Activated T-helper 1 cell treated with anti-CD3 and anti-CD28 coated beads, Interleukin-12 subunit alpha, Interleukin-12 subunit beta, Interleukin-2, Interleukin-4 antibody, amounts not matched to agents 30 ng/mL and 10 ng/mL and 1 ng/mL, durations not matched to agents 14 hours and 24 hours and 36 hours (primary cell): ENCODE measurements at regions of chr11 and their contacts with region 1.

Region 1: DNA sequence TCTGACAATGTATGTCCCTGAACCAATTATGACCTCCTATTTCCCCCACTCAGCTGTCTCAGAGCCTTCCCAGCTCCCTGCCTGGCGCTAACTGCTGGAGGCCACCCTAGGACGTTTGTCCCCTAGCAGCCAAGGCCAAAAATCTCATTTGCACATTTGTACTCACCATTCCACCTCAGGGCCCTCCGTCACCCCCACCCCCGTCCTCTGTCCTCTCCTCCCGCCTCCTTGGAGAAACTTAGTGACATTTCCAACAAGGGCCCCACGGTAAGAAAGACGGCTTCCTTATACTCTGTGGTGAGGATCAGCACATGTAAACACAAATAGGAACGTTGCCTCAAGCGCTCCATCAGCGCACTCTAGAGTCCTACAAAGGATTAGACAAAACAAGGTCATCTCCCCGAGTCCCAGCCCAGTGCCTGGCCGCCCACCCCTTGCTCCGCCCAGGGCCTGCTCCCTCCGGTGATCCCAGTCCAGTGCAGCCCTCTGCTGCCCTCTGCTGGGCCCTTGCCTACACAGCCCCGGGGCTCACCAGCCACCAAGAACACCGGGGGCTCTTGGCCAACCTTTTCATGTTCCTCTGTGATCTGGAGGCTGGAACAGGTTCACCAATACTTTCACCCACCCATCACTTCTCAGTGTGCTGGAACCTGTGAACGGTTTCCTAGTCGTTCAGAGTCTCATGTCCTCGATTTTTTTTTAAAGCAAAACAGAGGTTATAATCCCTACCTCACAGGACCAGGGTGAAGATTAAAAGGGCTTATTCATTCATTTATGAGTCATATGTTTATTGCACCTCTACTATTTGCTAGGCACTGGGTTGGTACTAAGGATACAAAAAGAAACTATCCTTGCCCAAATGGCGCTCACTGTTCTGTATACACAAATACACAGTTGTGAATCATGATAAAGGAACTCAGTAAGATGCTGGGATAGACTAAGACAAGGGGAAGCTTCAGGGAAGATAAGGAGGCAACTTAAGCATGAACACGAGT is 15.3 kb upstream of the CTR9 start:
- DNase-seq: peak; percentile 78
- H3K4me3 Mint-ChIP-seq: peak overlapping the region; percentile 37
- H3K27ac Mint-ChIP-seq: no peak overlapping the region
- H3K4me1 Mint-ChIP-seq: peaks cover 10% of the 10 kb centered on the region
- H3K27me3 Mint-ChIP-seq: peaks cover 10% of the 10 kb centered on the region

Region 2: DNA sequence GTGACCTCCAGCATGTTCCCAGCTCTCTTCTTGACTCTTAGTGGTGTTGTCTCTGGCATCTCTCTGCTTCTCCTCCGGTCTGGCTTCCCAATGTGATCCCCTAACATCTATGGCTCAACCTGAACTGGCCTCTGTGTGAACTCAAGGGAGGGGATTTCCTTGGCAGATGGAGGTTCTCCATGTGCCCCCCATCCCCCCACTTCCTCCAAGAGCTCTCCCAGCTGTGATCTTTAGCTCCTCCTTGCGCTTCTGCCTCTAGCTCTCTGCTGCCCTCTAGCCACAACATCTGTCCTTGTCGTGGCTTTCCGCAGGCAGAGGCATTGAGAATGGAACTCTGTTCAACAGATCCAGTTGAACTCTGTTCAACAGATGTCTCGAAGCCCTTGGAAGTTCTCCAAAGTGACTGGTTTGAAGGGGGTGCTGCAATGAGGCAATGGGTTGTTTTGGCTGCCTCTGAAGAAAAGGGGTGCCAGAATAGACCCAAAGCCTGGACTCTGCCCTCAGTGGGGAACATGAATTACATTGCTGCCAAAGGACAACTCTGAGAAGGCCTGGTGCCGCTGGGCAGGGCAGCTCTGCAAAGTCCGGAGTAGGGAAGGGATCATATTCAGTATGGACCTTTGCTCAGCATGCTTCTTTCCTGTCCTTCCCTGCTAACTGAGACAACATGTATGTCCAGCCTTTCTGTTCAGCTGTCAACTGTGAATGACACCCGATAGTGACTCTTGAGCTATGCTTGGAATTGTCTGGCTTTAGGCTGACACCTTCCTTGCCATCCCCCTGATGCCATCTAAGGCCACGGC is 369.0 kb before region 1 on chr11:
- intact Hi-C with region 1: loop called (anchors 1 kb)
- DNase-seq: peak; percentile 51
- H3K4me3 Mint-ChIP-seq: no peak overlapping the region
- H3K27ac Mint-ChIP-seq: no peak overlapping the region
- H3K4me1 Mint-ChIP-seq: peaks cover 5% of the 10 kb centered on the region
- H3K27me3 Mint-ChIP-seq: peaks cover 5% of the 10 kb centered on the region

Region 3: DNA sequence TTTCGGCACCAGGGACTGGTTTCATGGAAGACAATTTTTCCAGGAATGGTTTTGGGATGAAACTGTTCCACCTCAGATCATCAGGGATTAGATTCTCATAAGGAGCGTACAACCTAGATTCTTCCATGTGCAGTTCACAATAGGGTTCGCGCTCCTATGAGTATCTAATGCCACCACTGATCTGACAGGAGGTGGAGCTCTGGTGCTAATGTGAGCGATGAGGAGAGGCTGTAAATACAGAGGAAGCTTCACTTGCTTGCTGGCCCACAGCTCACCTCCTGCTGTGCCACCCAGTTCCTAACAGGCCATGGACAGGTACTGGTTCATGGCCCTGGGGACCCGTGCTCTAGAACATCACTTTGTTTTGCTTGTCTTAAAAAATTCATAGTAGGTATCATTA is 322.5 kb before region 1 on chr11:
- intact Hi-C with region 1: loop called (anchors 1 kb)
- DNase-seq: peak; percentile 22
- H3K4me3 Mint-ChIP-seq: no peak overlapping the region
- H3K27ac Mint-ChIP-seq: no peak overlapping the region
- H3K4me1 Mint-ChIP-seq: peaks cover 33% of the 10 kb centered on the region
- H3K27me3 Mint-ChIP-seq: peaks cover 11% of the 10 kb centered on the region

Region 4: DNA sequence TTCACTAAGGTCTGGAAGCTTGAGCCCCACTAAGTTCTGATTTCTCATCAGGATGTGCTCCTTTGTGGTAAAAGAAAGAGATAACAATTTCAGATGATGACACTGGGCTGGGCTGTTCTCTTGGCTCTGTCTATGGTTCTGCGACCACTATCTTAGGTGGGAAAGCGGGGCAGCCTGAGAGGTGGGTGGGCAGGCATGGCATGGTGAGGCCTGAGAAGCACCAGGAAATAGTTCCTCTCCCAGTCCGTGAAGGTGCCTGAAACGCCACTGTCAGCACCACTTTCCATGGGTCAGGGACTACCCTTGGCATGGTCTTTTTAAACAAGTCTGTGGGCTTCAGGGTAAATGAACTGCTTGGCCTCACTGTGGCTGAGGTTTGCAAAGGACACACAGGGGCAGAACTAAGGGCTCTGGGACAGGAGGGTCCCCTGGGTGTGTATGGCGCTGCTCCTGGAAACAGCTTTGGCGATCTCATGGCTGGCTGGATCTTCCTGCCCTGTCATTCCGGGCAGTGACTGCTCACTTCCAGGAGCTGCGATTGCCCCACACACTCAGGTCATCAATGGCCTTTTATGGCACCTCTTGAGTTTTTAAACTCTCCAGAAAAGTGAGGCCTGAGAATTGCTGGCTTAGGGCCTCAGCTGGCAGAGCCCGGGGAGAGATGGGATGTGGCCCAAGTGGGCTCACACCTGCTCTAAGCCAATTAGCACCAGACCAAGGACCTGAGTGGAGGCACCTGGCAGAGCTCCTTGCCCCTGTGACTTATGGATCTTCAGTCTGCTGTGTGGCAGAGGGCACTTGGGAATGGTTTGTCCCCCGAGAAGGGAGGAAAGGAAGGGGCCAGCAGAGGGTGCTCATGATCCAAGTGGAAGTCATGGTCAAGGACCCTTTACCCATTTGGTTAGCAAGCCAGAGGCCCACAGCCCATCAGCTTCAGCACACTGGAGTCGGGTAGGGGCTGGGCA is 111.7 kb before region 1 on chr11:
- intact Hi-C with region 1: loop called (anchors 1 kb)
- DNase-seq: no peak
- H3K4me3 Mint-ChIP-seq: no peak overlapping the region
- H3K27ac Mint-ChIP-seq: peak overlapping the region; percentile 49
- H3K4me1 Mint-ChIP-seq: peaks cover 14% of the 10 kb centered on the region
- H3K27me3 Mint-ChIP-seq: peaks cover 3% of the 10 kb centered on the region

Region 5: DNA sequence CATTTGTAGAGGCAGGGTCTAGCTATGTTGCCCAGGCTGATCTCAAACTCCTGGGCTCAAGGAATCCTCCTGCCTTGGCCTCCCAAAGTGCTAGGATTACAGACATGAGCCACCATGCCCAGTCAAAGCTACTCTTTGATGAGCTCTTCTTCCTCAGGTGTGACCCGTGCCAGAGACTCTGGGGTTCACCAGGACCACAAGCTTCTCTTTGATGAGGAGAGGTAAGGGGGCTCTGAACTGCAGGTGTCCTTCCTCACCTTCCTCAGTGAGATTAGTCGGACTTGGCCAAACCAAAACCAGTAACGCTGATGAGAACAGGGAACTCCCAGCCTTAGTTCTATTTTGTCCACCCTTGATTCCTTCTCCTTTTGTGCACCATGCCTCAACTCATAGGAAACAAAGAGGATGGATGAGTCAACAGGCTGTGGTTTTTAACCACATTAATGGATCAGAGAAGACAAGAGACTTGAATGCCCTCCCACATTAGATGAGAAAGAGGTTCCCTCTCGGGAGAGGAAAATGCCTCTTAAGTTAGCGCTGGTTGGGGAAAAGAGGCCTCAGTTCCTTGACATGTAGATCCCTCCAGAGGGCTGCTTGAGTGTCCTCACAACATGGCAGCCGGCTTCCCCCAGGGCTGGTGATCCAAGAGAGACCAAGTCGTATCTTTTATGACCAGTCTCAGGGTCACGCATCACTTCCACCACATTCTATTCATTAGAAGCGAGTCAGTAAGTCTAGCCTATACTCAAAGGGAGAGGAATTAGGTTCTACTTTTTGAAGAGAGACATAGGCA is 10.5 kb before region 1 on chr11:
- intact Hi-C with region 1: loop called (anchors 1 kb)
- DNase-seq: no peak
- H3K4me3 Mint-ChIP-seq: peak overlapping the region; percentile 47
- H3K27ac Mint-ChIP-seq: peak overlapping the region; percentile 61
- H3K4me1 Mint-ChIP-seq: peaks cover 24% of the 10 kb centered on the region
- H3K27me3 Mint-ChIP-seq: peaks cover 22% of the 10 kb centered on the region

Region 6: GRCh38 chr11:10824888-10825287 is 89.1 kb after region 1 on chr11:
- intact Hi-C with region 1: no loop called
- DNase-seq: no peak
- H3K4me3 Mint-ChIP-seq: no peak overlapping the region
- H3K27ac Mint-ChIP-seq: no peak overlapping the region
- H3K4me1 Mint-ChIP-seq: peaks cover 16% of the 10 kb centered on the region
- H3K27me3 Mint-ChIP-seq: no peaks in the 10 kb centered on the region